Endothelial cell of umbilical vein (primary cell): ENCODE measurements at regions of chr7 and their contacts with region 1.

Region 1: DNA sequence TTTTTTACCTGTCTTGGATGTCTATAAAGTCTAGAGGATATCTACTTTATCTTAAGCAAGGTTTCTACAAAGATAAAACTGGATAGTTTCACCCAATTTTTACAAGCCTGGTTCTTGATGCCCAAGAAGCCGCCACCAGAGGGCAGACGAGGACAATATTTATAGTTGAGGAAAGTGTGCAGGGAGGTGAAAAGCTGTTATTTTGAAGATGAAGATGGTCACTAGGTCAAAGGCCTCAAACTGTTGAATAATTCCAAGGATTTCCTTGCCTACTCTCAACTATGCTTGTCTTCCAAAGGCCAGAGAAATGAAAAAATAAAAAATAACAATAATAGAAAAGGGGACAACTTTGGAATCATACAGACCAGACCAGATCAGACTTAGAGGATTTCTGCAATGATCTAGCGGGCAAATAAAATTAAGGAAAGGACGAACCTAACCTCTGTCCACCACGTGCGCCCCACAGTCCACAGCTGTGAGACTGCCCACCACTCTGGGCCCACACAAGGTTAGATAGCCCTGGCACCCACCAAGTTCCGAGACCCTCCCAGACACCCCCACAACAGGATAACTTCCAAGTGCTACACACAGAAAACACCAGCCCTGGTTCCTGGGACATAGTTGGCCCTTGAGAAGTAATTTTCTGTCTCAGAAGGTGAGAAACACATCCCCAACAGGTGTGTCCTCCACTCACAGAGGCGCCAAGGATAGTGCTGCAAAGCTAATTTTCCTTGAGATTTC is 2.8 kb downstream of the PKD1L1 start:
- DNase-seq: peak; percentile 83
- H3K4me3 ChIP-seq: no peak overlapping the region
- H3K27ac ChIP-seq: peak overlapping the region; percentile 60
- H3K4me1 ChIP-seq: peaks cover 86% of the 10 kb centered on the region
- H3K27me3 ChIP-seq: no peaks in the 10 kb centered on the region
- CTCF ChIP-seq: peak; percentile 61 to 65
- POLR2A ChIP-seq: no peak

Region 2: DNA sequence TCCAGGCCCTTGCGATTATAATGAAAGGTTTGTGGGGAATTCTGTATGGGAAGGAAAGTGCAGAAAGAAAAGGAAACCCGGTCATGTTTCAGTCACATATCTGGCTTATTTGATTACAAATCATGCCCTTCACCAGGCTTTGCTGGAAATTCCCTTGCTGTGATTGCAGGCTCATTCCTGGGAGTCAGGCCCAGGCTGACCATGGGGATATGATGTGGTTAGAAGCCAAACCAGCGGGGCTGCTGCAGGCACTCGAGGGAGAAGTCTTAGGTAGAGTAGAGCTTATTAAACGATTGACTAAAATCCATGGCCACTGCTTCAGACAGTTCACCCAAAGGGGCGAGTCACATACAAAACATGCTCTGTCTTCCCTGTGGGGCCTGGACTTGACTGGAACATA is 13.4 kb before region 1 on chr7:
- CTCF ChIA-PET with region 1: interaction called, 13 read pairs
- POLR2A ChIA-PET with region 1: no interaction called
- dilution Hi-C with region 1: no loop called
- intact Hi-C with region 1: no loop called
- DNase-seq: no peak
- H3K4me3 ChIP-seq: no peak overlapping the region
- H3K27ac ChIP-seq: no peak overlapping the region
- H3K4me1 ChIP-seq: no peaks in the 10 kb centered on the region
- H3K27me3 ChIP-seq: no peaks in the 10 kb centered on the region
- CTCF ChIP-seq: no peak
- POLR2A ChIP-seq: no peak

Region 3: GRCh38 chr7:47979145-47979831 is 33.9 kb after region 1 on chr7 and contains the start of gene HUS1:
- CTCF ChIA-PET with region 1: interaction called, 12 read pairs
- POLR2A ChIA-PET with region 1: no interaction called
- dilution Hi-C with region 1: no loop called
- intact Hi-C with region 1: loop called (anchors 1 kb)
- DNase-seq: peak; percentile 52
- H3K4me3 ChIP-seq: peak within 1 kb of the TSS; percentile 70 to 93 (median 89)
- H3K27ac ChIP-seq: peak within 1 kb of the TSS; percentile 46
- H3K4me1 ChIP-seq: peaks cover 11% of the 10 kb centered on the region
- H3K27me3 ChIP-seq: peaks cover 0 to 4% of the 10 kb centered on the region in 2 experiments
- CTCF ChIP-seq: no peak
- POLR2A ChIP-seq: peak; percentile 43
- total RNA-seq, gene HUS1: 45.0 and 49.7 TPM in 2 replicates

Region 4: DNA sequence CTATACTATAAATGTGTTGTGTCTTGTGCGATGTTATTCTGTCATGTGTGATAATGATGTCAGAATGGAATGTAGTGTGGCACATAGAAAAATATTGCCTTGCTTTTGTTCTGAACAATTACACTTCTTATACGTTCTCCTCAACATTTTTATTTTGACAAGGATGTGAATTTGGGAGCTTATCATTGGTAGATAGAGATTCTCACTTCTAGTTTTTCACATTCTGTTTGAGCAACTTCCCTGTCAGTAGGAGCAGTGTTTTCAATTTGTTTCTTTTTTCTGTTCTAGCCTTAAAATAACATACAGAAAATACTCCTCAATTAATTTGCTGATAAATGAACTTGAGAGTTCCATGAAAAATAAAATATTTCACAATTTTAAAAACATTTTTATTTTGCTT is 65.9 kb after region 1 on chr7:
- CTCF ChIA-PET with region 1: no interaction called
- POLR2A ChIA-PET with region 1: no interaction called
- dilution Hi-C with region 1: no loop called
- intact Hi-C with region 1: no loop called
- DNase-seq: no peak
- H3K4me3 ChIP-seq: no peak overlapping the region
- H3K27ac ChIP-seq: no peak overlapping the region
- H3K4me1 ChIP-seq: no peaks in the 10 kb centered on the region
- H3K27me3 ChIP-seq: peaks cover 2 to 5% of the 10 kb centered on the region in 2 experiments
- CTCF ChIP-seq: no peak
- POLR2A ChIP-seq: no peak

Region 5: DNA sequence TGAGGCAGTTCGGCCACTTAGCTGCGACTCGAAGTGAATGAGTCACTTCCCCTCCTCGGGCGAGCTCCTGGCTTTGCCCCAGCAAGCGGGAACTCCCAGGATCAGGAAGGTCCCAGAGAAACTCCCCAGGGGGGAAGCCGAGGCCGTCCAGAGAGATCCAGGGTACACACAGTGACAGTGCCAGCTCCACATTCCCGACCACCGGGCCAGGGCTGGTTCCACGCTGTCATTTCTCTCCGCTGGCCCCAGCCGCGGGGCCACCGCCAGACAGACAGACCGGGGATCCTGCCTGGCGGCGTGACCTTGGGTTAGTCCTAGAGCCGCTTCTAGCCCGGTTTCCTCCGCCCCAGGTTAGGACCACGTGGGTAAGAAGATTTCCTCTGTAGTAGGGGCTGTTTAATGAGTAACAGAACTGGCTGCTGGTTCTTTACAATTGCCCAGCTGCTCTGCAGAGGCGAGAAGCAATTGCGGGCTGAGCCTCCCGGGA is 143.2 kb after region 1 on chr7:
- CTCF ChIA-PET with region 1: interaction called, 18 read pairs
- POLR2A ChIA-PET with region 1: no interaction called
- dilution Hi-C with region 1: no loop called
- intact Hi-C with region 1: loop called (anchors 1 kb)
- DNase-seq: no peak
- H3K4me3 ChIP-seq: peak overlapping the region; percentile 28 to 95 (median 54)
- H3K27ac ChIP-seq: peak overlapping the region; percentile 99
- H3K4me1 ChIP-seq: peaks cover 57% of the 10 kb centered on the region
- H3K27me3 ChIP-seq: no peaks in the 10 kb centered on the region
- CTCF ChIP-seq: no peak
- POLR2A ChIP-seq: peak; percentile 44

Region 6: GRCh38 chr7:48154792-48155413 is 209.5 kb after region 1 on chr7:
- CTCF ChIA-PET with region 1: interaction called, 33 read pairs
- POLR2A ChIA-PET with region 1: no interaction called
- dilution Hi-C with region 1: no loop called
- intact Hi-C with region 1: loop called (anchors 1 kb)
- DNase-seq: peak; percentile 55
- H3K4me3 ChIP-seq: no peak overlapping the region
- H3K27ac ChIP-seq: no peak overlapping the region
- H3K4me1 ChIP-seq: no peaks in the 10 kb centered on the region
- H3K27me3 ChIP-seq: peaks cover 7 to 13% of the 10 kb centered on the region in 2 experiments
- CTCF ChIP-seq: peak; percentile 53 to 66
- POLR2A ChIP-seq: no peak